ENCODE measurements at regions of chr6 and their contacts with region 1.

Region 1: GRCh38 chr6:17706580-17707370 is at the start of gene NUP153:
- DNase-seq: peak; percentile 100
- ATAC-seq: peak; percentile 67
- H3K4me3 Mint-ChIP-seq: peak within 1 kb of the TSS; percentile 89
- H3K27ac Mint-ChIP-seq: peak within 1 kb of the TSS; percentile 95
- H3K4me1 Mint-ChIP-seq: peaks cover 44% of the 10 kb centered on the region
- H3K27me3 Mint-ChIP-seq: no peaks in the 10 kb centered on the region
- CTCF ChIP-seq: no peak
- total RNA-seq, gene NUP153: 59.2 and 63.8 TPM in 2 replicates

Region 2: DNA sequence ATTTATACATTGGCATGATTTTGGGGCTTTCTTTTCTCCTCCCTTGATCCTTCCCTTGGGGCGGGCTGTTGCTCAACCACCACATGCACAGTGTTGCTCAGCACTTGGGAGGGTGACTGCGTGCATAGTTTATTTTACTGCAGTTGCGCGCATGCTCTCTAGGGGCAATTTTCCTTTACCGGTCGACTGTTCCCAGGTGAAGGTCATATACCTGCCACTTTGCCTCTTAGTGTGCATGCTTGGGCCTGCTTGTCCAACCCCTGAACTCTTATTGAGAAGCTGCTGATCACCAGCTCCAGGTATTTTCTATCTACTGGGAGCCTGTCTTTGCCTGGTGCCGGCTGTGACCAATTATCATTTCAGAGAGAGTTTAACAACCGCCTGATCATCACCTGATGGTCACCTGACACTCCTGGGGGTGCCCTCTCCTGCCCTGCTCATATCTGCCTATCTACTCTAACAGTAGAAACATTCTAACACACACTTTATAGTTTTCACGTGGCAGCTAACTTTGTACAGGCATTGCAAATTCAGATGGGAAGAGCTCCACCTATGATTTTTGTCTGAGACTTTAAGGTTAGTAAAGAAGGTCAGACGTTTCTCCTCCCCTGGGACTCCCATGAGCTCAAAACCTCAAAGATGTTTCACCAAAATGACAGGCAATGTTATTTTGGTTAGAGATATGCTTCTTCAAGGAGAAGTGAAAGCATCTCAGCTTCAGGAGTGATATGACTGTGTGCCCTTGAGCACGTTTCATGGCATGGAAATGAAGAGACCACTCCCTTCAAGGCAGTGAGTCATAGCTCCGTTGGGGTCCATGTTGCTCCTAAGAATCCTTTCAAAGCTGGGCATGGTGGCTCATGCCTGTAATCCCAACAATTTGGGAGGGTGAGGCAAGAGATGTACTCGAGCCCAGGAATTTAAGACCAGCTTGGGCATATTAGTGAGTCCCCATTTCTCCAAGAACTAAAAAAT is 1805.3 kb before region 1 on chr6:
- CTCF ChIA-PET with region 1: no interaction called
- POLR2A ChIA-PET with region 1: no interaction called
- intact Hi-C with region 1: loop called (anchors 10 kb)
- DNase-seq: peak; percentile 39
- ATAC-seq: peak; percentile 80
- H3K4me3 Mint-ChIP-seq: peak overlapping the region; percentile 80
- H3K27ac Mint-ChIP-seq: peak overlapping the region; percentile 98
- H3K4me1 Mint-ChIP-seq: peaks cover 83% of the 10 kb centered on the region
- H3K27me3 Mint-ChIP-seq: no peaks in the 10 kb centered on the region
- CTCF ChIP-seq: no peak

Region 3: GRCh38 chr6:17691925-17692538 is 14.7 kb before region 1 on chr6:
- CTCF ChIA-PET with region 1: interaction called, 3 read pairs
- POLR2A ChIA-PET with region 1: interaction called, 6 read pairs
- intact Hi-C with region 1: loop called (anchors 1 kb)
- DNase-seq: no peak
- ATAC-seq: no peak
- H3K4me3 Mint-ChIP-seq: no peak overlapping the region
- H3K27ac Mint-ChIP-seq: no peak overlapping the region
- H3K4me1 Mint-ChIP-seq: peaks cover 51% of the 10 kb centered on the region
- H3K27me3 Mint-ChIP-seq: no peaks in the 10 kb centered on the region
- CTCF ChIP-seq: no peak

Region 4: DNA sequence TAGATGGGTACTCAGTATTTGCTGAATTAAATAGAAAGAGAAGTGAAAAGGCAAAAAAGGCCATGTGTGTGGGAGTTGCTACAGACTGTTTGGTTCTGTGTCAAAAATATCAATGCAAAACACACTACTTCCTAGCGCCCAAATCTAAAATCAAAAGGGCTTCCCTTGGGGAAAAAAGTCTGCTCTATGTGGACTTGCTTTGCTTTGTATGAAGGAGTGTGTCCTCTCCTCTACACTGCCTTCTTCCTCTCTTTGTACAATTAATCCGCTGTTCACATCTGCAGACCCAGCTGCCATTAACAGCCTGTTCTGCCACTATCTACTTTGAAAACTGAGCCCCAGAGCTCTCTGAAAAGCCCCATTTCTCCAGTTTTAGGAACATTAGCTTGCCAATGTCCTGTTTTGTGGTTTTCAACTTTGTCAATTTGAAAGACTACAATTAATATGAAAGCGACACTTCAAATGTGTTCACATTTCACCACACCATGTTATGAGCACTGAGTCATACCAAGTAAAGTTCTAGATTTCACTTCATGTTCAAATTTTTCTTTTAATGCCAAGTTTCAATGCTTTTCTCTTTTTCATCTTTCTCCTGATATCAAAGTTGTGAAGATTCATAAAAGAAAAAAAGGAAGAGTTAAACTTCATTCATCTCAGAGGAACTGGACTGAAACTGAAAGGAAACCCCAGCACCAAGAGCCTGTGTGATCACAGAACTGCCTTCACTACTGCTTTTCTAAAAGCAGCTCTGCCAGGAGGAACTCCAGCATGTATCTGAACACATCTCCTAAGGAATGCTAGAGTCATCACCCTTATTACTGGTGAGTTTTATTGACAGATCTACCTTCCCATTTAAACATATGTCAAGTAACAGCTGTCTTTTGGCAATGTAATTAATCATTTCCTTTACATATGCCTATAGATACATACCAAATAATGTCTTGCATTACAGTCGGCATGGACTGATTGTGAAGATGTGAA is 178.0 kb after region 1 on chr6:
- CTCF ChIA-PET with region 1: no interaction called
- POLR2A ChIA-PET with region 1: no interaction called
- intact Hi-C with region 1: loop called (anchors 10 kb)
- DNase-seq: no peak
- ATAC-seq: peak; percentile 67
- H3K4me3 Mint-ChIP-seq: peak overlapping the region; percentile 78
- H3K27ac Mint-ChIP-seq: peak overlapping the region; percentile 83
- H3K4me1 Mint-ChIP-seq: peaks cover 40% of the 10 kb centered on the region
- H3K27me3 Mint-ChIP-seq: no peaks in the 10 kb centered on the region
- CTCF ChIP-seq: no peak

Region 5: DNA sequence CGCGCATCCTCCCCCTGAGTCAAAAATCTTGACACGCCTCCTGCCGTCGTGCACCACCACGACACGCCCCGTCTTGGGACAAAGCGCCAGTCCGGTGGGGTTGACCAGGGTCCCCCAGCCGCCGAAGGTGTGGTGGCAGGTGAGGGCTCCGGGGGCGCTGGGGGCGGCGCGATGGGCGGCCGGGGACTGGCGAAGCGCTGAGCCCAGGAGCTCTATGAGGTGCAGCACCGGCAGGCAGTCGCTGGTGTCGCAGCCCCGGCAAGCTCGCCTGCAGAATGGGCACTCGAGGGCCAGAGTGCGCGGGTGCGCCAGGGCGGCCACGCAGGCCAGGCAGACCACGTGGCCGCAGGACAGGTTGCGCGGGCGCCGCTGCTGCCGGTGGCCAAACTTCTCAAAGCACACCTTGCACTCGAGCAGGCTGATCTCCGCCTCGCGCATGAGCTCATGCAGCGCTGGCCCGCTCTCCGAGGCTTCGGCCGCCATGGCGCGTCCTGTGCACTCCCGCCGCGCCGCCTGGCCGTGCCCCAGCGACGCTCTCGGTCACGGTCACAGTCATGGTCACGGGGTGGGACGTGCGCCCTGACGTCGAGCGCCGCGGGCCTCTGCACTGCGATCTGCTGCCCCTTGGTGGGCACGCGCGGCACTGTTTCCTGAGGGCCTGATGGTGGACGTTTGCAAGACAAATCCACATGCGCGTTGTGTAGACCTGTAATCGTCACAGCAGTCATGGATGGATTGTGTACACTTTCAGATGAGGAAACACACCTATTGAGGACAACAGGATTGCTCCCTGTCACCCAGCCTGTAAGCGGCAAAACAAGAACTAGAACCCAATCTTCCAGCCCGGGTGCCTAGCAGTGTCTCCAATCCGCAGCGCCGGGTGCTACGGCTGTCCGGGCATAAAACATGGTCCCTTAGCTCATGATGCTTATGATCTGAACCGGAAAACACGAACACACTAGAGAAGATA is 415.6 kb after region 1 on chr6 and contains the start of gene NHLRC1:
- CTCF ChIA-PET with region 1: no interaction called
- POLR2A ChIA-PET with region 1: no interaction called
- intact Hi-C with region 1: loop called (anchors 10 kb)
- DNase-seq: peak; percentile 67
- ATAC-seq: peak; percentile 99
- H3K4me3 Mint-ChIP-seq: peak within 1 kb of the TSS; percentile 78
- H3K27ac Mint-ChIP-seq: no peak within 1 kb of the TSS
- H3K4me1 Mint-ChIP-seq: peaks cover 12% of the 10 kb centered on the region
- H3K27me3 Mint-ChIP-seq: no peaks in the 10 kb centered on the region
- CTCF ChIP-seq: no peak
- total RNA-seq, gene NHLRC1: 0.88 and 1.2 TPM in 2 replicates

Region 6: DNA sequence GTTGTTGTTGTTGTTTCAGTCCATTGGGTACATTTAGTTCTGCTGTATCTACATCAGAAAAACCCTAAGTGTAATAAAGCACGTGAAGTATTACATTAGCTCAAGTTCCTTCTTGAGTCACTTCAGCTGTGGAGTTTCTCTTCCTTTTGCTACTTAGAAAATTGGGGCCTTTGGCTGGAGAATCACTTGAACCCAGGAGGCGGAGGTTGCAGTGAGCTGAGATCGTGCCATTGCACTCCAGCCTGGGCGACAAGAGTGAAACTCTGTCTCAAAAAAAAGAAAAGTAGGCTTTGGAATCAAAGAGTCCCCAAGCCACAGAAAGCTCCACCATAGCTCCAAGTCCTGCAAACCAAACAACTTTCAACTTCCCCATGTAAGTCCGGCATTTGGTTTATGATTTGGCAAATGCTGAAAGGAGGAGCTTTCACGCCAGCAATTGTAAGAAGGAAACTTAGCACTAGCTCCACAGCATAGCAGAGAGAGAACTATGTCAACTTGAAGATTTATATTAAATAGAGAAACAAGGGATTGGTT is 623.8 kb after region 1 on chr6:
- CTCF ChIA-PET with region 1: no interaction called
- POLR2A ChIA-PET with region 1: interaction called, 4 read pairs
- intact Hi-C with region 1: loop called (anchors 10 kb)
- DNase-seq: peak; percentile 24
- ATAC-seq: peak; percentile 62
- H3K4me3 Mint-ChIP-seq: peak overlapping the region; percentile 29
- H3K27ac Mint-ChIP-seq: peak overlapping the region; percentile 84
- H3K4me1 Mint-ChIP-seq: peaks cover 53% of the 10 kb centered on the region
- H3K27me3 Mint-ChIP-seq: no peaks in the 10 kb centered on the region
- CTCF ChIP-seq: no peak

Measured in activated B cell treated with CpG ODN at 0.5 μM for 24 hours (primary cell).